ENCODE measurements at regions of chr1 and their contacts with region 1.

Region 1: DNA sequence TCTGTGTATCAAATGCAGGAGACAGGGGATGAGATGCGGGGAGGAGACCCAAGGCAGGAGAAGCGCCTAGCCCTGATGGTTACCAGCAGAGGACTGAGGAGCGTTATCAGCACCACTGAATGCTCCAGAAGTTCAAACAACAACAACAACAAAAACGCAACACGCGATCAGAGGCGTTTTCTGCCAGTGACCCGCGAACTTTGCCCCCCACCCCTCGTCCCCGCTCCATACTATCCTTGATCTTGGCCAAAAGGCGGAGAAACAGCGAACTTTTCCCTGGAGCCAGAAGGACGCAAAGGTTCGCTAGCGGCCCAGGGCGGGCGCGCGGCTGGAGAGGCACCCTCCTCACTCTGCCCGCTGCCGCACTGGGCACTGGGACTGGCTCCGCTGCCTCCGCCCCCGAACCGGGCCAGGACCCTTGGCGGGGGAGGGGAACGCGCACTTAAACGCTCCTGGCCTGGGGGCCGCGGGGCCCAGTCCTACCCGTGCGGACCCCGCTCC is 699 bp downstream of the ECHDC2 start:
- DNase-seq: peak; percentile 73
- H3K4me3 ChIP-seq: peak overlapping the region; percentile 68 to 77 (median 70)
- H3K27ac ChIP-seq: peak overlapping the region; percentile 83 to 91 (median 87)
- H3K4me1 ChIP-seq: peaks cover 0 to 15% (median 7%) of the 10 kb centered on the region in 4 donors
- H3K27me3 ChIP-seq: no peaks in the 10 kb centered on the region
- CTCF ChIP-seq: no peak
- EP300 ChIP-seq: no peak
- POLR2A ChIP-seq: no peak

Region 2: GRCh38 chr1:52321061-52321460 is 599.8 kb before region 1 on chr1:
- intact Hi-C with region 1: no loop called
- DNase-seq: no peak
- H3K4me3 ChIP-seq: no peak overlapping the region
- H3K27ac ChIP-seq: no peak overlapping the region
- H3K4me1 ChIP-seq: no peaks in the 10 kb centered on the region
- H3K27me3 ChIP-seq: no peaks in the 10 kb centered on the region
- CTCF ChIP-seq: no peak
- EP300 ChIP-seq: no peak
- POLR2A ChIP-seq: no peak

Region 3: DNA sequence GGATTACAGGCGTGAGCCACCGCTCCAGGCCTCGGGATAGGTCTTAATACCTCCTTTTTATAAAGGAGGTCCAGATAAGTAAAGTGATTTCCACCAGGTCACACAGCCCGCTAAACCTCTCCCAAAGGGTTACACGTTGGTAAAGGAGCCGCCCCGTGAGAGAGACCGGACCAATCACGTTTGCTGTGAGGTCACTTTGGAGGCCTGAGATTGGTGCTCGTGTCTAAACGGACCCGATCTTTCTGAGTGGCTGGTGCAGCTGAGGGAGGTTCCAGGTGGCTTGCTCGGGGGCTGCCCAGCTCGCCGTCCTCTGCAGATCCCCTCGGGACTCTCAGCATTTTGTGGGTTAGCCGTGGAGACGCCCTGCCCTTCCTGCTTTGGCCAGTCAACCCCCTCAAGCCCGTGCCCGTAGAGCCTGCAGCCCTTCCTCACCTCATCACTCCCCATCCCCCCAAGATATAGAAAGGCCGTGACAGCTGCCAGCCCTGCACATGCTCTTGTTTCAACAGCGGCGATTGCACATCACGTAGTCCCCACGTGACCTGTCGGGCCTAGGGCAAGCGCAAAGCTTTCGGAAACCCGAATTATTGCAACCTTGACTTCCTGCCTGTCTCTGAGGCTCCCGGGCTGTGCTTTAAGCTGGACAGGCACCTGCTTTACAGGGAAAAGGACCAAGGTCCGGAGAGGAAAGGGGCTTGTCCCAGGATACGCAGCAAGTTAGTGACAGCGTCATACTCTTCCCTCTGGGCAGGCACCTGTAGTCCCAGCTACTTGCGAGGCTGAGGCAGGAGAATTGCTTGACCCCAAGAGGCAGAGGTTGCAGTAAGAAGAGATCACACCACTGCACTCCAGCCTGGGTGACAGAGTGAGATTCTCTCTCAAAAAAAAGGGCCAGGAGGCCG is 217.7 kb before region 1 on chr1:
- intact Hi-C with region 1: loop called (anchors 5 kb)
- DNase-seq: peak; percentile 97
- H3K4me3 ChIP-seq: peak overlapping the region; percentile 45 to 59 (median 58)
- H3K27ac ChIP-seq: peak overlapping the region; percentile 85 to 86 (median 86)
- H3K4me1 ChIP-seq: peaks cover 0 to 35% (median 24%) of the 10 kb centered on the region in 4 donors
- H3K27me3 ChIP-seq: no peaks in the 10 kb centered on the region
- CTCF ChIP-seq: no peak
- EP300 ChIP-seq: no peak
- POLR2A ChIP-seq: peak; percentile 11 to 36

Region 4: DNA sequence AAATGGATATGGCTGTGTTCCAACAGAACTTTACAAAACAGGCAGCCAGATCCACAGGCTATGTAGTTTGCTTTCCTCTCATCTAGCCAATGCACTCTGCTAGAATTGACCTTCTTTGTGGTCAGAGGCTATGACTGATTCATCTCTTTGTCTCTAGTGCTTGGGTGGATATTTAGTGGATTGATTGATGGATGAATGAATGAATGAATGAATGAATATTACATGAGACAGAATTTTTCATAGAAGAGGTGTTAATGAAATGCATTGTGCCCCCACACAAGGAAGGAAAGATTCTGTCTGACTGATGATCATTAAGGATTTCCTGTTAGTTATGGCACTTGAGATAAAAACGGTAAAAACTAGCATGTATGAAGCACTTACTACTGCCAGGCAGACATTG is 128.8 kb before region 1 on chr1:
- intact Hi-C with region 1: no loop called
- DNase-seq: no peak
- H3K4me3 ChIP-seq: no peak overlapping the region
- H3K27ac ChIP-seq: no peak overlapping the region
- H3K4me1 ChIP-seq: no peaks in the 10 kb centered on the region
- H3K27me3 ChIP-seq: no peaks in the 10 kb centered on the region
- CTCF ChIP-seq: no peak
- EP300 ChIP-seq: no peak
- POLR2A ChIP-seq: no peak

Region 5: GRCh38 chr1:53014791-53015507 is 94.1 kb after region 1 on chr1:
- intact Hi-C with region 1: loop called (anchors 5 kb)
- DNase-seq: peak; percentile 85
- H3K4me3 ChIP-seq: peak overlapping the region; percentile 37 to 55 (median 54)
- H3K27ac ChIP-seq: peak overlapping the region; percentile 44 to 73 (median 68)
- H3K4me1 ChIP-seq: peaks cover 0 to 27% (median 22%) of the 10 kb centered on the region in 4 donors
- H3K27me3 ChIP-seq: no peaks in the 10 kb centered on the region
- CTCF ChIP-seq: no peak
- EP300 ChIP-seq: no peak
- POLR2A ChIP-seq: no peak

Region 6: DNA sequence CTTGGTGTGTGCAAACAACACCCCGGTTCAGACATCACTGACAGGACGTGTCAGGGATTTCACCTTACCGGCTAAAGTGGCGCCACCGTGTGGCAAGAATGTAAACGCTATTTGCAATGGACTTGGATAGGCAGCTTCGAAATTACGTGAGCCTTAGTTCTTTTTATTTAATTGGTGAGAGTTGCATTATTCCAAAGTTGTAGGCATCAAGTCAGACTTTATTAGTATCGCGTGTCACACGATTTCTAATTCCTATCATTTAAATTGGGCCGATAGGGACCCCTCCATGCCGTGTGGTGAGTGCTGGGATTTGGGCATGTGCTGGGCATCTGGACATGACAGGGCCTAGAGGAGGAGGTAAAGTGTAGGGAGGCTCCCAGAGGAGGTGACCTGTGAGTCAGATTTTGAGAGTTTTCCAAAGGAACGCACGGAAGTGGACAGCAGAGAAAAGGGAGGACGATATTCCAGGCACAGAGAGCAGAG is 261.3 kb after region 1 on chr1:
- intact Hi-C with region 1: loop called (anchors 5 kb)
- DNase-seq: peak; percentile 90
- H3K4me3 ChIP-seq: no peak overlapping the region
- H3K27ac ChIP-seq: peak overlapping the region in 2 of 4 donors; percentile 15 to 24
- H3K4me1 ChIP-seq: peaks cover 0 to 5% (median 3%) of the 10 kb centered on the region in 4 donors
- H3K27me3 ChIP-seq: no peaks in the 10 kb centered on the region
- CTCF ChIP-seq: peak; percentile 78 to 89 (median 86)
- EP300 ChIP-seq: no peak
- POLR2A ChIP-seq: no peak